ENCODE measurements at regions of chr22 and their contacts with region 1.

Region 1: GRCh38 chr22:31128156-31128555 is 5.4 kb downstream of the INPP5J start:
- DNase-seq: no peak
- H3K4me3 ChIP-seq: no peak overlapping the region
- H3K27ac ChIP-seq: no peak overlapping the region
- H3K4me1 ChIP-seq: peaks cover 8% of the 10 kb centered on the region
- CTCF ChIP-seq: no peak

Region 2: GRCh38 chr22:31155422-31155821 is 27.3 kb after region 1 on chr22:
- CTCF ChIA-PET with region 1: interaction called, 10 read pairs
- POLR2A ChIA-PET with region 1: interaction called, 4 read pairs
- intact Hi-C with region 1: no loop called
- DNase-seq: no peak
- H3K4me3 ChIP-seq: no peak overlapping the region
- H3K27ac ChIP-seq: no peak overlapping the region
- H3K4me1 ChIP-seq: peaks cover under 1% of the 10 kb centered on the region
- CTCF ChIP-seq: no peak